Right cardiac atrium (tissue), 5 donors: ENCODE measurements at regions of chr3 and their contacts with region 1.

Region 1: GRCh38 chr3:21752749-21753347 is 1.8 kb upstream of the ZNF385D start:
- DNase-seq: no peak
- ATAC-seq: peak; percentile 73
- H3K4me3 ChIP-seq: no peak overlapping the region
- H3K27ac ChIP-seq: no peak overlapping the region
- H3K4me1 ChIP-seq: no peaks in the 10 kb centered on the region
- H3K27me3 ChIP-seq: no peaks in the 10 kb centered on the region

Region 2: GRCh38 chr3:21839592-21839991 is 86.7 kb after region 1 on chr3:
- intact Hi-C with region 1: loop called in 1 of 4 experiments (anchors 10 kb)
- DNase-seq: peak in 1 of 3 donors; percentile 32
- ATAC-seq: peak; percentile 75 to 85
- H3K4me3 ChIP-seq: no peak overlapping the region
- H3K27ac ChIP-seq: no peak overlapping the region
- H3K4me1 ChIP-seq: no peaks in the 10 kb centered on the region
- H3K27me3 ChIP-seq: no peaks in the 10 kb centered on the region

Region 3: GRCh38 chr3:21894459-21895340 is 141.9 kb after region 1 on chr3:
- intact Hi-C with region 1: loop called (anchors 5 to 10 kb)
- DNase-seq: no peak
- ATAC-seq: peak in 1 of 2 donors; percentile 40
- H3K4me3 ChIP-seq: no peak overlapping the region
- H3K27ac ChIP-seq: no peak overlapping the region
- H3K4me1 ChIP-seq: no peaks in the 10 kb centered on the region
- H3K27me3 ChIP-seq: no peaks in the 10 kb centered on the region

Region 4: DNA sequence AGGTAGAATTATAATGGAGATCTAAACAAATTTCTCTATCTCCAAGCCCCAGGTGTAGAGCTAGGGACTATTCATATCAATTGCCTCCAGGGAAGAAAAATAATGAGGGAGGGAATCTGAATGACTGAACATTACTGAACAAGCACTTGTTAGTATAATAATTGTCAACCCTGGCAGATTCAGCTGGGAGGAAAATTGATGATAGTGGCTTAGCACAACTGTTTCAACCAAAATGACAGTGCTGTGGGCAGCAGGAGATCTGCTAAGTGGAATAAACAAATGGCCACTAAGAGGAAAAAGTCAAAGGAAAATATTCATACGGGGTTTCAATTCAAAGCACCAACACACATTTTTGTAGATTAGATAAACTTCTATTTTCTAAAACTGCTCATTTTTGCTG is 293.0 kb after region 1 on chr3:
- intact Hi-C with region 1: no loop called
- DNase-seq: no peak
- ATAC-seq: no peak
- H3K4me3 ChIP-seq: no peak overlapping the region
- H3K27ac ChIP-seq: no peak overlapping the region
- H3K4me1 ChIP-seq: no peaks in the 10 kb centered on the region
- H3K27me3 ChIP-seq: no peaks in the 10 kb centered on the region